ENCODE measurements at regions of chr6 and their contacts with region 1.

Region 1: GRCh38 chr6:163945808-163946207 is 531.3 kb downstream of the QKI start:
- DNase-seq: no peak
- H3K4me3 ChIP-seq: no peak overlapping the region; a peak in 3 of 8 replicates
- H3K27ac ChIP-seq: no peak overlapping the region
- H3K4me1 ChIP-seq: peaks cover 8 to 27% (median 24%) of the 10 kb centered on the region in 4 experiments
- H3K27me3 ChIP-seq: no peaks in the 10 kb centered on the region; a peak in 1 of 7 replicates
- CTCF ChIP-seq: no peak
- EP300 ChIP-seq: no peak
- POLR2A ChIP-seq: no peak
- RAD21 ChIP-seq: no peak

Region 2: GRCh38 chr6:163956571-163957407 is 11.0 kb after region 1 on chr6:
- CTCF ChIA-PET with region 1: interaction called, 16 read pairs
- POLR2A ChIA-PET with region 1: interaction called, 6 read pairs
- DNase-seq: peak; percentile 62 to 80
- H3K4me3 ChIP-seq: no peak overlapping the region
- H3K27ac ChIP-seq: no peak overlapping the region
- H3K4me1 ChIP-seq: peaks cover 4 to 9% (median 8%) of the 10 kb centered on the region in 4 experiments
- H3K27me3 ChIP-seq: no peaks in the 10 kb centered on the region
- CTCF ChIP-seq: peak; percentile 78 to 95 (median 95)
- EP300 ChIP-seq: no peak
- POLR2A ChIP-seq: no peak
- RAD21 ChIP-seq: peak; percentile 98 to 99